ENCODE measurements at regions of chr5 and their contacts with region 1.

Region 1: GRCh38 chr5:151252762-151253604 is at the start of gene GM2A:
- DNase-seq: peak; percentile 98
- ATAC-seq: peak; percentile 81
- H3K4me3 ChIP-seq: peak within 1 kb of the TSS; percentile 98
- H3K27ac ChIP-seq: peak within 1 kb of the TSS; percentile 69
- H3K4me1 ChIP-seq: peaks cover 25% of the 10 kb centered on the region
- H3K27me3 ChIP-seq: no peaks in the 10 kb centered on the region
- CTCF ChIP-seq: no peak
- EP300 ChIP-seq: no peak
- POLR2A ChIP-seq: peak; percentile 94
- RAD21 ChIP-seq: no peak
- polyA plus RNA-seq, gene GM2A: 33.6 to 44.4 TPM

Region 2: GRCh38 chr5:150479416-150479815 is 773.6 kb before region 1 on chr5:
- CTCF ChIA-PET with region 1: no interaction called
- POLR2A ChIA-PET with region 1: interaction called, 10 read pairs
- RAD21 ChIA-PET with region 1: no interaction called
- SMC1A ChIA-PET with region 1: no interaction called
- in situ Hi-C with region 1: no loop called
- intact Hi-C with region 1: no loop called
- DNase-seq: no peak
- ATAC-seq: no peak
- H3K4me3 ChIP-seq: no peak overlapping the region
- H3K27ac ChIP-seq: no peak overlapping the region
- H3K4me1 ChIP-seq: peaks cover 24% of the 10 kb centered on the region
- H3K27me3 ChIP-seq: no peaks in the 10 kb centered on the region
- CTCF ChIP-seq: no peak
- EP300 ChIP-seq: no peak
- POLR2A ChIP-seq: no peak
- RAD21 ChIP-seq: no peak

Region 3: DNA sequence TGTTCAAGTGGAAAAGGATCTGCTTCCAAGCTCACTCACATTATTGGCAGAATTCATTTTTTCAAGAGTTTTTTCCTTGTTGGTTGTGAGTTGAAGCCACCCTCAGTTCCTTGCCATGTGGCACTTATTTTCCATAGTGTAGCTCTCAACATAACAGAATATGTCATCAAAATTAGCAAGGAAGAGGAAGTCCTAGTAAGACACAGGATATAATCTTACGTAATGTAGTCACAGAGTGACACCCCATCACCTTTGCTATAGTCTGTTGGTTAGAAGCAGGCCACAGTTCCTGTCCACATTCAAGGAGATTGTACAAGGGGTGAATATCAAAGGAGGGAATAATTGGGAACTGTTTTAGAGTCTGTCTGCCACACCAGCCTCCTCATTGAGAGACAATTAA is 390.9 kb before region 1 on chr5:
- CTCF ChIA-PET with region 1: no interaction called
- POLR2A ChIA-PET with region 1: no interaction called
- RAD21 ChIA-PET with region 1: no interaction called
- SMC1A ChIA-PET with region 1: no interaction called
- in situ Hi-C with region 1: no loop called
- intact Hi-C with region 1: no loop called
- DNase-seq: no peak
- ATAC-seq: no peak
- H3K4me3 ChIP-seq: no peak overlapping the region
- H3K27ac ChIP-seq: no peak overlapping the region
- H3K4me1 ChIP-seq: no peaks in the 10 kb centered on the region
- H3K27me3 ChIP-seq: no peaks in the 10 kb centered on the region
- CTCF ChIP-seq: no peak
- EP300 ChIP-seq: no peak
- POLR2A ChIP-seq: no peak
- RAD21 ChIP-seq: no peak

Region 4: GRCh38 chr5:151141535-151141934 is 111.4 kb before region 1 on chr5:
- CTCF ChIA-PET with region 1: no interaction called
- POLR2A ChIA-PET with region 1: interaction called, 6 read pairs
- RAD21 ChIA-PET with region 1: interaction called, 14 read pairs
- SMC1A ChIA-PET with region 1: interaction called, 6 read pairs
- in situ Hi-C with region 1: no loop called
- intact Hi-C with region 1: no loop called
- DNase-seq: no peak
- ATAC-seq: peak; percentile 90
- H3K4me3 ChIP-seq: peak overlapping the region; percentile 52
- H3K27ac ChIP-seq: peak overlapping the region; percentile 61
- H3K4me1 ChIP-seq: peaks cover 60% of the 10 kb centered on the region
- H3K27me3 ChIP-seq: no peaks in the 10 kb centered on the region
- CTCF ChIP-seq: no peak
- EP300 ChIP-seq: no peak
- POLR2A ChIP-seq: peak; percentile 67
- RAD21 ChIP-seq: 0 out of 2 replicates have a peak, but pooled peaks have one; percentile 13

Region 5: DNA sequence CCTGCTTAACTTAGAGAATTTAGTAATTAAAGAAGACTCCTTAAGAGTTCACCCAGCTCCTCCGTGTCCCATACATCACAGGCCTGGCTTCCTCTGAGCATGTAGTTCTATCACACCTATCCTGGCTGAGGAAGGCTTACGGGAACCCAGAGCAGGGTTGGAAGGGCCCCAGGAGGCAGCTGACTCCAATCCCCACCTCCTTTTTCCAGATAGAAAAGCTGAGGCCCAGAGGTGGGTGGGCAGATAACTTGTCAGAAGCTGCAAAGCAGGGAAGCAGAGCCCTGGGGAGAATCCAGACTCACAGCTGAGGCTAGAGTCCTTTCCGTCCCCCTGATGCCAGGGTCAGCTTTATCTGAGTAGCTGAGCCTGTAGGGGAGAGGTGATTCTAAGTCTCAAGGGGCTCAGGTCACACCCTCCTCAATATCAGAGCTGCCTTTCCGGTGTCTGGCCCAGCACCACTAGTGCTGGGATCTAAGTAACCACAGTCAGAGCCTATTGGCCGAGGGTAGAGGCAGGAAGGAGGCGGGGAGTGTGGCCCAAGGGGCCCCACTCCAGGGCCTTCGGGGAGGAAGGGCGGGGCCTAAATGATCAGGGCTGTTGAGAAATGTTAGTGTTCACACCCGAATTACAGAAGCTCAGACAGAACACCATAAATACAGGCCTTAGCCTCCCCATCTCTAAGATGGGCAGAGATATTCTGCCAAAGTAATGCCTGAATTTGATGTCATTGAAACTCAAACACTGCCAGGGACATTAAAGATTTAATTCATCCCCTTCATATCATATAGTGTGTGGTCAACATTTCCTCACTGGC is 39.0 kb before region 1 on chr5:
- CTCF ChIA-PET with region 1: interaction called, 28 read pairs
- POLR2A ChIA-PET with region 1: interaction called, 216 read pairs
- RAD21 ChIA-PET with region 1: interaction called, 156 read pairs
- SMC1A ChIA-PET with region 1: interaction called, 227 read pairs
- in situ Hi-C with region 1: no loop called
- intact Hi-C with region 1: loop called (anchors 1 kb)
- DNase-seq: peak; percentile 93
- ATAC-seq: peak; percentile 83
- H3K4me3 ChIP-seq: peak overlapping the region; percentile 74
- H3K27ac ChIP-seq: peak overlapping the region; percentile 99
- H3K4me1 ChIP-seq: peaks cover 57% of the 10 kb centered on the region
- H3K27me3 ChIP-seq: no peaks in the 10 kb centered on the region
- CTCF ChIP-seq: no peak
- EP300 ChIP-seq: peak in 1 of 2 experiments; percentile 64; a peak in 1 of 4 replicates
- POLR2A ChIP-seq: peak; percentile 93
- RAD21 ChIP-seq: no peak

Region 6: DNA sequence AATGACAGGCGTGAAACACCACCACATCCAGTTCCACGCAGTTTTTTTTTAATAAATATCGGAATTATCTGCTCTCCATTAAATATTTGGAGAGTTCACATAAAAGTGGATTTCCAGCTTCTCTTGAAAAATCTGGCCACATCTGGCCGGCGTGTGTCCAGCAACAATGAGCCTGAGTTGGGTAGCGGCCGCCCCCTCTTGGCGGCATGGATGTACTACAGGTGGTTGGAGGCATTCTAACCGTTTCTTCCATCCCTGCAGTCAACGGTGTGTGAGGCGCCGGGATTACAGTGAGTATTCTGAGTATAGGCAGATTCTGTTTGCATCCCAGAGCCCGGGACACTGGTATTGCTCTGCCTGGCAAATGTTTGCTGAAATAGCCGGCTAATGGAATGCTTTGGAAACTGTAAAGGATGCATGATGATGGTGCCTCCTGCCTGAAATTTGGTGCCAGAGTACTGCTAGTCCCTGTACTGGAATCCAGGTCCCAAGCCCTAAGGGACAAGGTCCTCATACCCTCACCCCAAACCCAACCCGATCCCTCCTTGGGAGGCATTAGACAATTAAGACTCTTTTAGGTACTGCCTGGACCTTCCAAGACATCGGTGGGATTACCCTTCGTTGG is 13.6 kb before region 1 on chr5:
- CTCF ChIA-PET with region 1: interaction called, 62 read pairs
- POLR2A ChIA-PET with region 1: interaction called, 74 read pairs
- RAD21 ChIA-PET with region 1: interaction called, 81 read pairs
- SMC1A ChIA-PET with region 1: interaction called, 86 read pairs
- in situ Hi-C with region 1: no loop called
- intact Hi-C with region 1: loop called (anchors 1 kb)
- DNase-seq: no peak
- ATAC-seq: peak; percentile 61
- H3K4me3 ChIP-seq: no peak overlapping the region; the same call in 1 of the 2 replicates
- H3K27ac ChIP-seq: no peak overlapping the region
- H3K4me1 ChIP-seq: peaks cover 70% of the 10 kb centered on the region
- H3K27me3 ChIP-seq: no peaks in the 10 kb centered on the region
- CTCF ChIP-seq: peak; percentile 66 to 72 (median 72)
- EP300 ChIP-seq: no peak
- POLR2A ChIP-seq: no peak
- RAD21 ChIP-seq: peak; percentile 82

Region 7: GRCh38 chr5:151298063-151298855 is 45.3 kb after region 1 on chr5:
- CTCF ChIA-PET with region 1: interaction called, 7 read pairs
- POLR2A ChIA-PET with region 1: no interaction called
- RAD21 ChIA-PET with region 1: interaction called, 33 read pairs
- SMC1A ChIA-PET with region 1: interaction called, 5 read pairs
- in situ Hi-C with region 1: no loop called
- intact Hi-C with region 1: no loop called
- DNase-seq: peak; percentile 26
- ATAC-seq: peak; percentile 98
- H3K4me3 ChIP-seq: no peak overlapping the region
- H3K27ac ChIP-seq: no peak overlapping the region
- H3K4me1 ChIP-seq: no peaks in the 10 kb centered on the region
- H3K27me3 ChIP-seq: no peaks in the 10 kb centered on the region; a peak in 1 of 4 replicates
- CTCF ChIP-seq: peak; percentile 72 to 82 (median 75)
- EP300 ChIP-seq: no peak
- POLR2A ChIP-seq: no peak
- RAD21 ChIP-seq: peak; percentile 83

Region 8: GRCh38 chr5:151345808-151346478 is 93.0 kb after region 1 on chr5:
- CTCF ChIA-PET with region 1: no interaction called
- POLR2A ChIA-PET with region 1: no interaction called
- RAD21 ChIA-PET with region 1: no interaction called
- SMC1A ChIA-PET with region 1: no interaction called
- in situ Hi-C with region 1: no loop called
- intact Hi-C with region 1: no loop called
- DNase-seq: no peak
- ATAC-seq: no peak
- H3K4me3 ChIP-seq: no peak overlapping the region
- H3K27ac ChIP-seq: no peak overlapping the region
- H3K4me1 ChIP-seq: no peaks in the 10 kb centered on the region
- H3K27me3 ChIP-seq: peaks cover 0 to 4% of the 10 kb centered on the region in 2 experiments; a peak in 1 of 4 replicates
- CTCF ChIP-seq: no peak
- EP300 ChIP-seq: no peak
- POLR2A ChIP-seq: no peak
- RAD21 ChIP-seq: no peak

Measured in GM12878 (cell line).